ENCODE measurements at regions of chr3 and their contacts with region 1.

Region 1: GRCh38 chr3:152061296-152061695 is 187.9 kb downstream of the SUCNR1 start:
- DNase-seq: no peak
- H3K4me3 ChIP-seq: no peak overlapping the region
- H3K27ac ChIP-seq: no peak overlapping the region
- H3K4me1 ChIP-seq: no peaks in the 10 kb centered on the region
- H3K27me3 ChIP-seq: no peaks in the 10 kb centered on the region

Region 2: GRCh38 chr3:152047465-152047864 is 13.8 kb before region 1 on chr3:
- CTCF ChIA-PET with region 1: no interaction called
- POLR2A ChIA-PET with region 1: no interaction called
- DNase-seq: no peak
- H3K4me3 ChIP-seq: no peak overlapping the region
- H3K27ac ChIP-seq: no peak overlapping the region
- H3K4me1 ChIP-seq: peaks cover 0 to 3% (median 0%) of the 10 kb centered on the region in 4 experiments
- H3K27me3 ChIP-seq: no peaks in the 10 kb centered on the region

Region 3: DNA sequence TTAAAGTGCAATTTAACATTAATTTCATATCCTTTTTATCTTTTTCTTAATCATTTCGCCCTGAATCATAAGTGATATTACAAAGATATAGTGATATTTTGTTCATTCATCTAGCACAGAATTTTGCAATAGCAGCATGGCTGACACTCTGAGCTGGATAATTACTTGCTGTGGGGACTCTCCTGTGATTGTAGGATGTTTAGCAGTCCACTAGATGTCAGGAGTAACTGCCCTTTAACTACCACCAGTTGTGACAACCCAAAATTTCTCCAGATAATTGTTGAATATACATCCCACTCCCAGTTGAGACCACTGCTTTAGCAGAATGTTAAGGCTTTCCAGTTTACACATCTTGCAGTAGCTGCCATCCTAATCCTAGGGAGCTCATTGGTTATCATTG is 10.6 kb after region 1 on chr3:
- CTCF ChIA-PET with region 1: interaction called, 10 read pairs
- POLR2A ChIA-PET with region 1: no interaction called
- DNase-seq: peak; percentile 52 to 78 (median 76)
- H3K4me3 ChIP-seq: no peak overlapping the region
- H3K27ac ChIP-seq: no peak overlapping the region
- H3K4me1 ChIP-seq: no peaks in the 10 kb centered on the region
- H3K27me3 ChIP-seq: no peaks in the 10 kb centered on the region